Activated T-helper 1 cell treated with anti-CD3 and anti-CD28 coated beads, Interleukin-12 subunit alpha, Interleukin-12 subunit beta, Interleukin-2, Interleukin-4 antibody, amounts not matched to agents 30 ng/mL and 10 ng/mL and 1 ng/mL, durations not matched to agents 14 hours and 24 hours and 36 hours (primary cell): ENCODE measurements at regions of chr5 and their contacts with region 1.

Region 1: DNA sequence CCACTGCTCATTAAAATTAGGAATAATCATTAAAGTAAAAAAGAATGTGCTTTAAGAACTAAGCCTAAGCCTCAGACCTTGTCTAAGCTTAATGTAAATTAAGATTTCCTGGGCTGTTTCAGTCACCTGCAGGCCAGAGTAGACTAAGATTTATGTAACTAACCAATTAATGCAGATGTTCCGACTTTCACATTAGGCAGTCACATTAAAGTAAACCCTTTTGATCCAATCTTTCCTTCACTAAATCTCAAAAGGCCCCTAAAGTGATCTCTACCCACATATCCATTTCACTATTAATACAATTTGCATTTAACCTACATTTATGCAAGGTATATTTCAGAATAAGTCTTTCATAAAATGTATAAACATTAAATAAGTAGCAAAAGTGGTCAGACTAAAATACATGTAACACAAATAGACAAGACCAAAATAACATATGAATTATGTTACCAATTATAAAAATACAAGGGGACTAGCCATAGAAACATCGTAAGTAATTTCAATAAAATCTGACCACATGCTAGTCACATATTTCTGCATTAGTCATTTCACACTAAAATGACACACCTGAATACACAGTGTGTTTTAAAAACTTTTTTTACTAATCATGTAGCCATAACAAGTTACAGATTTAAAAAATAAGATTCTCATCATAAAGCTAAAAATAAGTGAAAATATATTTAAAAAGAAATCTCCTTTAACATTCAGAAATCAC is 7.7 kb downstream of the NR3C1 start:
- DNase-seq: no peak
- H3K4me3 Mint-ChIP-seq: peak overlapping the region; percentile 72
- H3K27ac Mint-ChIP-seq: no peak overlapping the region
- H3K4me1 Mint-ChIP-seq: peaks cover 81% of the 10 kb centered on the region
- H3K27me3 Mint-ChIP-seq: no peaks in the 10 kb centered on the region

Region 2: GRCh38 chr5:143314659-143315058 is 81.1 kb before region 1 on chr5:
- intact Hi-C with region 1: loop called (anchors 5 kb)
- DNase-seq: no peak
- H3K4me3 Mint-ChIP-seq: no peak overlapping the region
- H3K27ac Mint-ChIP-seq: peak overlapping the region; percentile 29
- H3K4me1 Mint-ChIP-seq: peaks cover 41% of the 10 kb centered on the region
- H3K27me3 Mint-ChIP-seq: no peaks in the 10 kb centered on the region